Breast epithelium (tissue), 4 donors: ENCODE measurements at regions of chr11 and their contacts with region 1.

Region 1: GRCh38 chr11:70270104-70270876 is at the start of gene PPFIA1:
- DNase-seq: peak; percentile 95 to 96
- H3K4me3 ChIP-seq: peak within 1 kb of the TSS; percentile 86 to 98 (median 92)
- H3K27ac ChIP-seq: peak within 1 kb of the TSS; percentile 93 to 95
- H3K4me1 ChIP-seq: peaks cover 0 to 13% of the 10 kb centered on the region in 2 donors
- H3K27me3 ChIP-seq: no peaks in the 10 kb centered on the region
- CTCF ChIP-seq: no peak
- POLR2A ChIP-seq: peak; percentile 56
- total RNA-seq, gene PPFIA1: 52.2 to 80.8 (median 78.0) TPM

Region 2: DNA sequence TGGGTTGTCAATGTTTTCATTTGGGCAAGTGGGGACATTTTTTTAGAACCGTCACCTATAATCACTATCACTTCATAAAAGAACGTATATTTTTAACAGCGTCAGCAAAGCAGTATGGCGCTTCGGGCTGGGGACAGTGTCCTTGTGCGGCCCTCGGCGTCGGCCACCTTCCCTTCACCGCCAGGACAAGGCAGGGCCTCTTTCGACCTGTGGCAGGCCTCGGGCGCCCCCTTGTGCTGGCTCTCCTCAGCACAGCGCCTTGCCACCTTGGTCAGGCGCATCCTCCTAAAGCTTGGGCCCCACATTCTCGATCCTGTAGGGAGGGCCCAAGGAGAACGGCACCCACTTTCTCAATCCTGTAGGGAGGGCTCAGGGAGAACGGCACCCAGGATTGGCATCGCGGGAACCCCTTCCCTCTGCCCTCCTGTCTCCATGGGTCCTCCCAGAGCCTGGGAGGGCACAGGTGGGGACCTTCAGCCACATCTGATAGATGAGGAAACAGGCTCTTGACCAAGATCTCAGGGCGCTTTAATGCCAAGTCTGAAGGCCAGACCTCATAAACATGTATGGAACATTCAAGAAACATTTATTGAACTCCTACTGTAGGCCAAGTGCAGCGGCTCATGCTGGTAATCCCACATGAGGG is 78.7 kb before region 1 on chr11:
- intact Hi-C with region 1: no loop called
- DNase-seq: peak; percentile 52 to 83
- H3K4me3 ChIP-seq: no peak overlapping the region
- H3K27ac ChIP-seq: peak overlapping the region; percentile 7 to 17
- H3K4me1 ChIP-seq: no peaks in the 10 kb centered on the region
- H3K27me3 ChIP-seq: no peaks in the 10 kb centered on the region
- CTCF ChIP-seq: peak; percentile 57 to 93 (median 87)
- POLR2A ChIP-seq: no peak

Region 3: DNA sequence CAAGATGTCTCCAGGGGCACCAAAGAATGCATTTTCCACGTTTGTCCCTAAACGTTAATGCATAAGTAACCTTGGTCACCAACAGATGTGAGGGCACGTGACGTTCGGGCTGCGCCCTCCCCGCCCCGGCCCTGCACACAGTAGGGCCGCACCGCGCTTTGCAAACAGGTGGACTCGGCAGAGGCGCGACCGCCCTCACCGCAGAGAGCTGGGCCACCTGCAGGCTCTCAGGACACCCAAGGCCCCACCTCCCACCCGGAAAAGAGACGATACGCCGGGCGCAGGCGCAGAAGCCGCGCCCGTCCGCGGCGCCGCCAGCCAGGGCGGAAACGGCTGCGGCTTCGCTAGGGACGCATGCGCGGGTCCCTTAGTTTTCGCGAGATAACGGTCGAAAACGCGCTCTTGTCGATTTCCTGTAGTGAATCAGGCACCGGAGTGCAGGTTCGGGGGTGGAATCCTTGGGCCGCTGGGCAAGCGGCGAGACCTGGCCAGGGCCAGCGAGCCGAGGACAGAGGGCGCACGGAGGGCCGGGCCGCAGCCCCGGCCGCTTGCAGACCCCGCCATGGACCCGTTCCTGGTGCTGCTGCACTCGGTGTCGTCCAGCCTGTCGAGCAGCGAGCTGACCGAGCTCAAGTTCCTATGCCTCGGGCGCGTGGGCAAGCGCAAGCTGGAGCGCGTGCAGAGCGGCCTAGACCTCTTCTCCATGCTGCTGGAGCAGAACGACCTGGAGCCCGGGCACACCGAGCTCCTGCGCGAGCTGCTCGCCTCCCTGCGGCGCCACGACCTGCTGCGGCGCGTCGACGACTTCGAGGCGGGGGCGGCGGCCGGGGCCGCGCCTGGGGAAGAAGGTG is 67.2 kb before region 1 on chr11 and contains the start of gene FADD:
- intact Hi-C with region 1: loop called (anchors 2 kb)
- DNase-seq: peak; percentile 83 to 88
- H3K4me3 ChIP-seq: peak within 1 kb of the TSS; percentile 82 to 98 (median 95)
- H3K27ac ChIP-seq: peak within 1 kb of the TSS; percentile 90 to 94
- H3K4me1 ChIP-seq: peaks cover 6 to 15% of the 10 kb centered on the region in 2 donors
- H3K27me3 ChIP-seq: no peaks in the 10 kb centered on the region
- CTCF ChIP-seq: no peak
- POLR2A ChIP-seq: peak; percentile 56
- total RNA-seq, gene FADD: 17.6 to 33.1 (median 30.2) TPM

Region 4: GRCh38 chr11:70252844-70253243 is 17.4 kb before region 1 on chr11:
- intact Hi-C with region 1: loop called (anchors 1 kb)
- DNase-seq: no peak
- H3K4me3 ChIP-seq: no peak overlapping the region
- H3K27ac ChIP-seq: peak overlapping the region; percentile 79 to 89
- H3K4me1 ChIP-seq: peaks cover 0 to 8% of the 10 kb centered on the region in 2 donors
- H3K27me3 ChIP-seq: no peaks in the 10 kb centered on the region
- CTCF ChIP-seq: no peak
- POLR2A ChIP-seq: no peak